T-cell (primary cell): ENCODE measurements at regions of chr14 and their contacts with region 1.

Region 1: GRCh38 chr14:93752635-93753561 is 35.4 kb downstream of the PRIMA1 start:
- DNase-seq: no peak
- ATAC-seq: no peak
- H3K4me3 ChIP-seq: no peak overlapping the region
- H3K4me3 Mint-ChIP-seq: no peak overlapping the region
- H3K27ac ChIP-seq: no peak overlapping the region
- H3K27ac Mint-ChIP-seq: no peak overlapping the region
- H3K4me1 ChIP-seq: no peaks in the 10 kb centered on the region
- H3K4me1 Mint-ChIP-seq: no peaks in the 10 kb centered on the region
- H3K27me3 ChIP-seq: peaks cover 0 to 6% of the 10 kb centered on the region in 2 experiments
- H3K27me3 Mint-ChIP-seq: no peaks in the 10 kb centered on the region

Region 2: GRCh38 chr14:93619176-93619793 is 133.6 kb before region 1 on chr14:
- CTCF ChIA-PET with region 1: no interaction called
- POLR2A ChIA-PET with region 1: no interaction called
- DNase-seq: peak in 4 of 35 experiments; percentile 1 to 17 (median 3)
- ATAC-seq: no peak
- H3K4me3 ChIP-seq: no peak overlapping the region
- H3K4me3 Mint-ChIP-seq: no peak overlapping the region
- H3K27ac ChIP-seq: no peak overlapping the region
- H3K27ac Mint-ChIP-seq: no peak overlapping the region
- H3K4me1 ChIP-seq: no peaks in the 10 kb centered on the region
- H3K4me1 Mint-ChIP-seq: no peaks in the 10 kb centered on the region
- H3K27me3 ChIP-seq: peaks cover 2 to 9% of the 10 kb centered on the region in 2 experiments
- H3K27me3 Mint-ChIP-seq: peaks cover 3 to 19% of the 10 kb centered on the region in 2 donors

Region 3: DNA sequence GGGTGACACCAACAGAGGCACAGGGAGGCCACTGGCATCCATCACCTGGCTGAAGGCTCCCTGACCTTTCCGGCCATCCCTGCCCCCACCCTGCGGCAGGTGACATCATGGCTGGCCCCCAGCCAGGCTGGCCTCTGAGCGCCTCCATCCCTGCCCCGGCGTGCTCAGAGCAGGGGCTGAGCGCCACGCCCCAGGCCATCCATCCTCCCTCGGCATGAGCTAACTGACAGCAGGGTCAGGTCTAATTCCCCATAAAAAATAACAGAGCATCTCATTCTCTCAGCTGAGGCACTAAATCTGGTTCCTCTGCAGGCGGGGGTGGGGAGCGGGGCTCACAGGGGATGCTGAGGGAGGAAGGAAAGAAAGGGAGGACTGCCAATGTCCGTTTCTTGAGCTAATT is 15.3 kb before region 1 on chr14:
- CTCF ChIA-PET with region 1: interaction called in 1 of 2 experiments, 10 read pairs
- POLR2A ChIA-PET with region 1: interaction called in 1 of 2 experiments, 3 read pairs
- DNase-seq: no peak
- ATAC-seq: no peak
- H3K4me3 ChIP-seq: no peak overlapping the region
- H3K4me3 Mint-ChIP-seq: no peak overlapping the region
- H3K27ac ChIP-seq: no peak overlapping the region
- H3K27ac Mint-ChIP-seq: no peak overlapping the region
- H3K4me1 ChIP-seq: no peaks in the 10 kb centered on the region
- H3K4me1 Mint-ChIP-seq: no peaks in the 10 kb centered on the region
- H3K27me3 ChIP-seq: peaks cover 0 to 4% of the 10 kb centered on the region in 2 experiments
- H3K27me3 Mint-ChIP-seq: peaks cover 9 to 14% of the 10 kb centered on the region in 2 donors